Heart left ventricle (tissue), 16 donors: ENCODE measurements at regions of chr6 and their contacts with region 1.

Region 1: GRCh38 chr6:75296811-75297779 is 12.5 kb upstream of the TMEM30A start:
- DNase-seq: no peak
- ATAC-seq: peak in 3 of 4 donors; percentile 34 to 46 (median 36)
- H3K4me3 ChIP-seq: no peak overlapping the region
- H3K27ac ChIP-seq: no peak overlapping the region
- H3K4me1 ChIP-seq: peaks cover 0 to 31% (median 21%) of the 10 kb centered on the region in 12 donors
- H3K27me3 ChIP-seq: no peaks in the 10 kb centered on the region
- CTCF ChIP-seq: peak; percentile 65 to 87 (median 78)
- POLR2A ChIP-seq: no peak

Region 2: DNA sequence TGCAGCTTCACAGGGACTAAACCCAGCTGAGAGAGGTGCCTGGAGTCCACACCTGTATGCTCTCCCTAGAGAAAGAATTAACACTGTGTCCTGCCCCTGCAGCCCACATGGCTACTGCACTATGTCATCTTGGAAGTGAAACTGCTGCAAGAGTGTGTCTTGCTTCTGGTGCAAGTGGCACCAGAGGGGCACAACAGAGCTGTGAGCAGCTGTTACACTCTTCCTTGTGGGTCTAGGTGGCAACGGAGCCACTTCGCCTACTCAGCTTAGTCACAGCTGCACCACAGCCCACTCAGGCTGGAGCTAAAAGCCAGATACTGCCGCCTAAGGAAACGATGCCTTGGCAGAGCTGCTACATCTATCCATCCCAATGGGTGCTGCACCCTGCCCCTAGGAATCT is 482.7 kb before region 1 on chr6:
- intact Hi-C with region 1: no loop called
- DNase-seq: no peak
- ATAC-seq: no peak
- H3K4me3 ChIP-seq: no peak overlapping the region
- H3K27ac ChIP-seq: no peak overlapping the region
- H3K4me1 ChIP-seq: no peaks in the 10 kb centered on the region
- H3K27me3 ChIP-seq: no peaks in the 10 kb centered on the region
- CTCF ChIP-seq: no peak
- POLR2A ChIP-seq: no peak

Region 3: DNA sequence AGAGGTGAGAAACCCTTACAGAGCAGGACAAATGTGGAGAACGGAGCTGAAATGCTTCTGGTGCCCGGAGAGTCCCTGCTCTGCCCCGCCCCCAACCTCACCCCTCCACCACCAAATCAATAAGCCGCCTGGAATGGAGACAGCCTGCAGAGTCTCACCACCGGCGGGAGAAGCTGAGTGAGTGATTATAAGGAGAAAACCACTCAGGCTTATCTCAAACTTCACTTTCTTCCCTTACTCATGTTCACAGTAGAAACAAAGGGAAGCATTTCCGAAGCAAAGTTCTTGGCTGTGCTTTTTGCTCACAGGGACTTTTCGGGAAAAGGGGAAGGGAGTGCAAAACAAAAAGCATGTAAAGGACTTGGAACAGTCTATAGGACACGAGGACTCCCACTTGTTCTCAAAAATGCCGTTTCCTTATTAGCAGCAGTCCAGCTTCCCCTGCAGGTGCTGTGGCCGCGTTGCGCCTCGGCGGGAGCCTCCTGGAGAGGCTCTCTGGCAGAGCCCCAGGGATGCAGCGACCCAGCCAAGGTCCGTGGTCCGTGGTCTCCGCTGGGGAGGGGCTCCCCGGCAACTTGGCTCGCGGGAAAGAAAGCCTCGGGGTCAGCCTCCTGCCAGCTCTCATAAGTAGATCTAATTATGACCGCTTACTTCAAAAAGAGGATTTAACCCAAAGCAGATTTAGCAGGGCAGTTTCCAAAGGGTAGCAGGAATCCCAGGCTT is 52.3 kb after region 1 on chr6:
- intact Hi-C with region 1: loop called in 1 of 10 experiments (anchors 5 kb)
- DNase-seq: peak in 4 of 5 donors; percentile 42 to 63 (median 44)
- ATAC-seq: peak; percentile 32 to 68 (median 54)
- H3K4me3 ChIP-seq: peak overlapping the region in 9 of 12 donors; percentile 21 to 50 (median 34)
- H3K27ac ChIP-seq: peak overlapping the region in 10 of 12 donors; percentile 11 to 63 (median 40)
- H3K4me1 ChIP-seq: peaks cover 0 to 30% (median 18%) of the 10 kb centered on the region in 12 donors
- H3K27me3 ChIP-seq: no peaks in the 10 kb centered on the region
- CTCF ChIP-seq: peak in 3 of 12 donors; percentile 7 to 29 (median 23)
- POLR2A ChIP-seq: no peak

Region 4: GRCh38 chr6:75504465-75505228 is 207.6 kb after region 1 on chr6:
- intact Hi-C with region 1: loop called in 7 of 10 experiments (anchors 2 to 5 kb)
- DNase-seq: no peak
- ATAC-seq: peak; percentile 53 to 91 (median 88)
- H3K4me3 ChIP-seq: no peak overlapping the region
- H3K27ac ChIP-seq: no peak overlapping the region
- H3K4me1 ChIP-seq: peaks cover 0 to 23% (median 4%) of the 10 kb centered on the region in 12 donors
- H3K27me3 ChIP-seq: no peaks in the 10 kb centered on the region
- CTCF ChIP-seq: peak; percentile 29 to 70 (median 58)
- POLR2A ChIP-seq: no peak

Region 5: GRCh38 chr6:75526502-75527127 is 229.5 kb after region 1 on chr6:
- intact Hi-C with region 1: loop called (anchors 1 to 10 kb)
- DNase-seq: peak in 3 of 5 donors; percentile 45 to 62 (median 51)
- ATAC-seq: peak; percentile 49 to 92 (median 88)
- H3K4me3 ChIP-seq: no peak overlapping the region
- H3K27ac ChIP-seq: no peak overlapping the region
- H3K4me1 ChIP-seq: peaks cover 0 to 9% (median 0%) of the 10 kb centered on the region in 12 donors
- H3K27me3 ChIP-seq: no peaks in the 10 kb centered on the region
- CTCF ChIP-seq: peak; percentile 55 to 81 (median 76)
- POLR2A ChIP-seq: no peak

Region 6: DNA sequence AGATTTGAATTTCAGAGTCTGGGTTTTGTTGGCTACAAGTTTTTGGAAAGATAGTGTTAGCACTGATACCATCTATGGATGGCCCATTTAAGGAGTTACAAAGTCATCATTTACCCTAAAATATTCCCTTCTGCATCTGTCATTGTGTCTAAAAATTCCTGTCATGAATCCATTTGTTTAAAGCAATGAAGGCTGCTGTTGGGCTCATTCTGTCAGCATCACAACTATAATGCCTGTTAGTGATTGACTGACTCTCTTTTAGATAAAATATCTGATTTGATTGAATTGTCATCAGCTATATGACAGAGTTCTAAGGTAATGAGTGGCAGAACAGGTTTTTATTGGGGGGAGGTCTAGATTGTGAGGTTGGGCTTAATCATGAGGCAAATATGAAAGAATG is 943.0 kb after region 1 on chr6:
- intact Hi-C with region 1: no loop called
- DNase-seq: no peak
- ATAC-seq: no peak
- H3K4me3 ChIP-seq: no peak overlapping the region
- H3K27ac ChIP-seq: no peak overlapping the region
- H3K4me1 ChIP-seq: no peaks in the 10 kb centered on the region
- H3K27me3 ChIP-seq: no peaks in the 10 kb centered on the region
- CTCF ChIP-seq: no peak
- POLR2A ChIP-seq: no peak